PC-3 (cell line): ENCODE measurements at regions of chr1 and their contacts with region 1.

Region 1: DNA sequence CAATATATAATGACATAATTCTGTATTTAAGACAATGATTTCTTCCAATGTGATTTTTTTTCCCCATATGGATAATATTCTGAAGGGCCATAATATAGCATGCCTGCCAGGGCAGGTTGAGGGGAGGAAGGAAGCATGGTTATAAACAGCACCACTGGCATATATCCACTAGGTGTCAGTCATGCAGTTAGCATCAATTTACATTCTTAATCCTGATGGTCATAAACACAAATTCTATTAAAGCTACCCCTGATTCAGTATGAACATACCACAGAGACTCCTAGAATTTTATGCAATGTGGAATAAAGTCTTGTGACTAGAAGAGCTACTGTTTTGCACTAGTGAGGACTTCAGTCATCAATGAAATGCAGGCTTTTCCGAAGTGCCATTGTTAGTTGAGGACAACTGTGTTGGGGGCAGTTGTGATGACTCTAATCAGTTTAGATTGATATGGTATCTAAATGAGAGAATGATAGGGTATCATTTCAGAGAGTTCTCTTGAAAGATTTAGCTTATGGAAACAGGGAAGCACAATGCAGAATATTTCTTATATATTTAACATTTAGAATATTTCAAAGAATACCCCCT is 342.7 kb upstream of the NR5A2 start:
- DNase-seq: peak; percentile 80
- ATAC-seq: peak; percentile 84
- H3K4me3 ChIP-seq: no peak overlapping the region
- H3K27ac ChIP-seq: no peak overlapping the region
- H3K4me1 ChIP-seq: peaks cover 13% of the 10 kb centered on the region
- H3K27me3 ChIP-seq: no peaks in the 10 kb centered on the region
- CTCF ChIP-seq: peak; percentile 79

Region 2: GRCh38 chr1:198756470-198756869 is 928.3 kb before region 1 on chr1:
- CTCF ChIA-PET with region 1: no interaction called
- POLR2A ChIA-PET with region 1: no interaction called
- intact Hi-C with region 1: loop called (anchors 5 kb)
- DNase-seq: peak; percentile 41
- ATAC-seq: peak; percentile 38; the same call in 1 of the 2 replicates
- H3K4me3 ChIP-seq: no peak overlapping the region
- H3K27ac ChIP-seq: no peak overlapping the region
- H3K4me1 ChIP-seq: no peaks in the 10 kb centered on the region
- H3K27me3 ChIP-seq: no peaks in the 10 kb centered on the region
- CTCF ChIP-seq: peak; percentile 46; the same call in 1 of the 2 replicates

Region 3: GRCh38 chr1:199720496-199720895 is 35.7 kb after region 1 on chr1:
- CTCF ChIA-PET with region 1: no interaction called
- POLR2A ChIA-PET with region 1: no interaction called
- intact Hi-C with region 1: no loop called
- DNase-seq: peak; percentile 2
- ATAC-seq: peak; percentile 29; the same call in 1 of the 2 replicates
- H3K4me3 ChIP-seq: no peak overlapping the region
- H3K27ac ChIP-seq: no peak overlapping the region
- H3K4me1 ChIP-seq: no peaks in the 10 kb centered on the region
- H3K27me3 ChIP-seq: no peaks in the 10 kb centered on the region
- CTCF ChIP-seq: no peak

Region 4: DNA sequence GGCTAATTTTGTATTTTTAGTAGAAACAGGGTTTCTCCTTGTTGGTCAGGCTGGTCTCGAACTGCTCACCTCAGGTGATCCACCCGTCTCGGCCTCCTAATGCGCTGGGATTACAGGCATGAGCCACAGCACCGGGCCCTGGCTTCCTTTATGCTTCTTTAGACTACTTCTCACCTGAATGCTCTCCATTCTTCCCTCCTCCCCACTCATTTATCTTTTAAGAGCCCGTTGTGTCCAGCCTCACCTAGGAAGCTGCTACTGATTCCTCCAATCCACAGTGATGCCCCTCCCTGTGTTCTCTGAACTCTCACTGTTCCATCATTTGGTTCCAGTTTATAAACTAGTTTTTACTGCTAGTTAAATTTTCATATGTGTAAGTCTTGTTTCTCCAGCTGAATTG is 297.8 kb after region 1 on chr1:
- CTCF ChIA-PET with region 1: no interaction called
- POLR2A ChIA-PET with region 1: no interaction called
- intact Hi-C with region 1: loop called (anchors 1 kb)
- DNase-seq: no peak
- ATAC-seq: peak; percentile 79
- H3K4me3 ChIP-seq: no peak overlapping the region
- H3K27ac ChIP-seq: no peak overlapping the region
- H3K4me1 ChIP-seq: no peaks in the 10 kb centered on the region
- H3K27me3 ChIP-seq: no peaks in the 10 kb centered on the region
- CTCF ChIP-seq: no peak

Region 5: DNA sequence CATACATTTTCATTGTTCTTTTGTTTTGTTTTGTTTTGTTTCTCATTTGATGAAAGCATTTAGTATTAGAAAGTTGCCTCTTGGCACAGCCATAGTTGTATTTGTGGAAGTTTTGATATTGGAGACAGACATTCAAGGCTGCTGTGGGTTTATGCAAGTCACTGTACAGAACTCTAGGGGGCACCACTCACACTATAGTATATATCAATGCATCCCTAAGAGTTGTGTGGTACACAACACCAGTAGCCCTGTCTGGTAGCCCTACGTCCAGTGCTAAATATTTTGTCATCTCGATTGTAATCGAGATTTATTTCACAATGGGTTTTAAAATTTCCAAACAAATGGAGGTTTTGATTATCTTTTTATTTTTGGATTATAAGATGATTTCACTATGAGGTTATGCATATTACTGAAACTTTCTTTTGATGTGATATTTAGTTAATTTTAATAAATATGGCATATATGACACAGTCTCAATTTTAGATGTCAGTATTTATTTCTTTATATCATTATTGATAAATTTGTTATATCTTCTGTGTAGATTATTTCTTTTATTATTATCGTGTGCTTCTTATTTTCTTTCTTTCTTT is 455.0 kb after region 1 on chr1:
- CTCF ChIA-PET with region 1: no interaction called
- POLR2A ChIA-PET with region 1: no interaction called
- intact Hi-C with region 1: loop called (anchors 1 kb)
- DNase-seq: peak; percentile 93
- ATAC-seq: peak; percentile 100
- H3K4me3 ChIP-seq: no peak overlapping the region
- H3K27ac ChIP-seq: no peak overlapping the region
- H3K4me1 ChIP-seq: no peaks in the 10 kb centered on the region
- H3K27me3 ChIP-seq: no peaks in the 10 kb centered on the region
- CTCF ChIP-seq: peak; percentile 100

Region 6: GRCh38 chr1:200409761-200410565 is 725.2 kb after region 1 on chr1 and contains the start of gene ZNF281:
- CTCF ChIA-PET with region 1: no interaction called
- POLR2A ChIA-PET with region 1: no interaction called
- intact Hi-C with region 1: loop called (anchors 10 kb)
- DNase-seq: peak; percentile 99
- ATAC-seq: peak; percentile 96
- H3K4me3 ChIP-seq: peak within 1 kb of the TSS; percentile 85
- H3K27ac ChIP-seq: peak within 1 kb of the TSS; percentile 48
- H3K4me1 ChIP-seq: peaks cover 60% of the 10 kb centered on the region
- H3K27me3 ChIP-seq: no peaks in the 10 kb centered on the region
- CTCF ChIP-seq: no peak
- total RNA-seq, gene ZNF281: 23.3 and 26.6 TPM in 2 replicates